Activated CD4-positive, alpha-beta T cell treated with anti-CD3 and anti-CD28 coated beads for 36 hours (primary cell): ENCODE measurements at regions of chr11 and their contacts with region 1.

Region 1: GRCh38 chr11:64240394-64241174 is at the start of gene FKBP2:
- DNase-seq: peak; percentile 99
- ATAC-seq: peak; percentile 68
- H3K4me3 Mint-ChIP-seq: peak within 1 kb of the TSS; percentile 86
- H3K27ac Mint-ChIP-seq: peak within 1 kb of the TSS; percentile 99
- H3K4me1 Mint-ChIP-seq: peaks cover 31% of the 10 kb centered on the region
- H3K27me3 Mint-ChIP-seq: no peaks in the 10 kb centered on the region
- total RNA-seq, gene FKBP2: 19.9 to 21.3 TPM

Region 2: GRCh38 chr11:63710476-63711217 is 529.9 kb before region 1 on chr11:
- CTCF ChIA-PET with region 1: no interaction called
- POLR2A ChIA-PET with region 1: no interaction called
- intact Hi-C with region 1: no loop called
- DNase-seq: no peak
- ATAC-seq: no peak
- H3K4me3 Mint-ChIP-seq: no peak overlapping the region
- H3K27ac Mint-ChIP-seq: no peak overlapping the region
- H3K4me1 Mint-ChIP-seq: peaks cover 5% of the 10 kb centered on the region
- H3K27me3 Mint-ChIP-seq: no peaks in the 10 kb centered on the region

Region 3: DNA sequence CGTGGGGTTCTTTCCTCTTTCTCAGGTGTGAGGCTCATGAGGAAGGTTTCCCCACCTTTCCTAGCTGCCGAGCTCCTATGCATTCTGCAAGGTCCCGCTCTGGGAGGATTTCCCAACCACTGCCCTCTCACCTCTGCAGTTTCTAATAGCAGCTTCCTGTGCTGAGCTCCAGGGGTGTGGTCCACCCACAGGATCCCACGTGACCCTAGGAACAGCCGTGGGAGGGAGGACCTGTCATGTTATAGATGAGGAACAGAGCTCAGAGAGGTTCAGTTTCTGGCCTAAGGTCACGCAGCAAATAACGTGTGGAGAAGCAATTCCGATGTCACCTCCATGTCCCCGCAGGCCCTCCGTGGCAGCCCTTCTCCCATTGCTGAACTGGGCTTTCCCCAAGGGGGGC is 166.3 kb before region 1 on chr11:
- CTCF ChIA-PET with region 1: no interaction called
- POLR2A ChIA-PET with region 1: no interaction called
- intact Hi-C with region 1: no loop called
- DNase-seq: peak; percentile 30
- ATAC-seq: peak; percentile 51
- H3K4me3 Mint-ChIP-seq: no peak overlapping the region
- H3K27ac Mint-ChIP-seq: no peak overlapping the region
- H3K4me1 Mint-ChIP-seq: peaks cover 3% of the 10 kb centered on the region
- H3K27me3 Mint-ChIP-seq: no peaks in the 10 kb centered on the region

Region 4: GRCh38 chr11:64341851-64342791 is 101.5 kb after region 1 on chr11:
- CTCF ChIA-PET with region 1: no interaction called
- POLR2A ChIA-PET with region 1: no interaction called
- intact Hi-C with region 1: loop called in 1 of 2 experiments (anchors 1 kb)
- DNase-seq: peak; percentile 96
- ATAC-seq: peak; percentile 77
- H3K4me3 Mint-ChIP-seq: no peak overlapping the region
- H3K27ac Mint-ChIP-seq: no peak overlapping the region
- H3K4me1 Mint-ChIP-seq: peaks cover 28% of the 10 kb centered on the region
- H3K27me3 Mint-ChIP-seq: no peaks in the 10 kb centered on the region

Region 5: DNA sequence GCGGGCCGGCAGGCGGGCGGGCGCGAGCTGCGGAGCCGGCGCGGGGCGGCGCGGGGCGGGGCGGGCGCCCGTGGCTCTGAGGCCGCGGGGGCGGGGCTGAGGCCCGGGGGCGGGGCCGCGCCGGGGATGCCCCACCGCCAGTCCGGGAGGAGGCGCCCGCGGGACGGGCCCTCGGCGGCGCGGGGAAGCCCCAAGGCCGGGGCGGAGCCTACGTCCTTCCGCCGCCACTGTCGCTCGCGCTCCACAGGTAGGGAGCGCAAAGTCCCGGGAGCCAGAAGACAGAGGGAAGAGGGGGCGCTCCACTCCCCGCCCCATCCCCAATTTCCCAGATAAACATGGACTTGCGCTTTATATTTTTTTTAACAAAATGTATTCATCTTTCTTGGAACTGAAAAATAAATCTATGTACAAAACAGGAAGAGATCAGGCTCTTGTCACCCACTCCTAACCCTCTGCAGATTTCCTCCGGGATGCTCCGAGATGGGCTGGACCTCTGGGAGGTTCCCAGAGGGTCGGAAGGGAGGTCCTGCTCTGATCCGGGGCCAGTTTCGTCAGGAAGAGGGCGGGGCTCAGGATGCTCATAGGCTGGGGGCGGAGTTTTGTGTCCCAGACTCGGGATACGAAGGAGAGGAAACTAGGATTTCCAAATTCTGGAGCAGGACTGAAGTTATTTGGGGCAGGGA is 562.7 kb after region 1 on chr11 and contains the start of gene MAP4K2:
- CTCF ChIA-PET with region 1: no interaction called
- POLR2A ChIA-PET with region 1: no interaction called
- intact Hi-C with region 1: loop called in 1 of 2 experiments (anchors 1 kb)
- DNase-seq: peak; percentile 92
- ATAC-seq: peak; percentile 93
- H3K4me3 Mint-ChIP-seq: peak within 1 kb of the TSS; percentile 75
- H3K27ac Mint-ChIP-seq: peak within 1 kb of the TSS; percentile 90
- H3K4me1 Mint-ChIP-seq: peaks cover 27% of the 10 kb centered on the region
- H3K27me3 Mint-ChIP-seq: no peaks in the 10 kb centered on the region
- total RNA-seq, gene MAP4K2: 54.0 to 57.3 TPM